Mammary epithelial cell (primary cell): ENCODE measurements at regions of chr7 and their contacts with region 1.

Region 1: GRCh38 chr7:27329911-27330310 is 87.3 kb downstream of the EVX1 start:
- DNase-seq: no peak
- H3K4me3 ChIP-seq: no peak overlapping the region
- H3K27ac ChIP-seq: no peak overlapping the region
- H3K4me1 ChIP-seq: peaks cover 5% of the 10 kb centered on the region
- H3K27me3 ChIP-seq: no peaks in the 10 kb centered on the region
- CTCF ChIP-seq: peak in 1 of 2 donors; percentile 40

Region 2: DNA sequence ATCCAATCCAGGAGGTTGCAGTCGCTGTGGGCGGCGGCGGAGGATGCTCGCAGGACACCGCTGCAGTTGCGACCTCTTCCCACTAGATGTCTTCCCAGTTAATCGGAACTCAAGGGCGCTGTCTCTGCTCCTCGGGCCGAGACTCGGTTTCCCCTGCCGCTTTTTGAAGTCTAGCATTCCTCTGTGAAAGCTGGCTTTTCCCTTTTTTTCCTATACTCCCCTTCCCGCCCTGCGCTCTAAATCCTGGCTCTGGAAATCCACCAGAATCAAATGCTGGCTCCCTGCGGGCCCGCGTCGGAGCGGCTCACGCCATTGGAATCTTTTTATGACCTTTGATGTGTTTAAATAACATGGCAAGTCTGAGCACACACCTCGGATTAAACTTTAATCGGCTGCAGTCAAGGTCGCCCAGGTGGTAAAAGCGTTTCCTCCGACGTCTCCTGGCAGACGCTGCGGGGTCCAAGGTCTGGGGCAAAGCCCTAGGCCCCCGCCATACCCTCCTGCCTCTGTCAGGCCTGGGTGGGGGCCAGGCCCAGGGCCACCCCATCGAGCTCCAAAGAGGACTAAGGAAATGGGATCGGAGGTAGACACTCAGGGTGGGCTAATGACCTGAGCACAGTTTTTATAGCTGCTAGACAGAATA is 119.3 kb before region 1 on chr7:
- CTCF ChIA-PET with region 1: no interaction called
- dilution Hi-C with region 1: no loop called
- in situ Hi-C with region 1: no loop called
- intact Hi-C with region 1: loop called (anchors 5 kb)
- DNase-seq: peak; percentile 20
- H3K4me3 ChIP-seq: no peak overlapping the region
- H3K27ac ChIP-seq: no peak overlapping the region
- H3K4me1 ChIP-seq: no peaks in the 10 kb centered on the region
- H3K27me3 ChIP-seq: peaks cover 20% of the 10 kb centered on the region
- CTCF ChIP-seq: peak; percentile 53 to 78

Region 3: DNA sequence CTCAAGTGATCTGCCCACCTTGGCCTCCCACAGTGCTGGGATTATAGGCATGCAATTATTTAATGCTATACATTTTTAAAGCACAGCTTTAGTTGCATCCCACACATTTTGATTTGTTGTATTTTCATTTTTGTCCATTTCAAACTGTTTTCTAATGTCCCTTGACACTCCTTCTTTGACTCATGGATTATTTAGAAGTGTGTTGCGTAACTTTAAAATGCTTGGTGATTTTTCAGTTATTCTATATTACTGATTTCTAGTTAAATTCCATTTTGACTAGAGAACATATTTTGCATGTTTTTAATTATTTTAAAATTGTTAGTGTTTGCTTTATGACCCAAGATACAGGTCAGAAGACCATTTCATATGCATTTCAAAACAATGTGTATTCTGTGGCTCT is 58.5 kb before region 1 on chr7:
- CTCF ChIA-PET with region 1: no interaction called
- dilution Hi-C with region 1: loop called (anchors 5 kb)
- in situ Hi-C with region 1: no loop called
- intact Hi-C with region 1: no loop called
- DNase-seq: no peak
- H3K4me3 ChIP-seq: no peak overlapping the region
- H3K27ac ChIP-seq: no peak overlapping the region
- H3K4me1 ChIP-seq: no peaks in the 10 kb centered on the region
- H3K27me3 ChIP-seq: no peaks in the 10 kb centered on the region
- CTCF ChIP-seq: no peak

Region 4: DNA sequence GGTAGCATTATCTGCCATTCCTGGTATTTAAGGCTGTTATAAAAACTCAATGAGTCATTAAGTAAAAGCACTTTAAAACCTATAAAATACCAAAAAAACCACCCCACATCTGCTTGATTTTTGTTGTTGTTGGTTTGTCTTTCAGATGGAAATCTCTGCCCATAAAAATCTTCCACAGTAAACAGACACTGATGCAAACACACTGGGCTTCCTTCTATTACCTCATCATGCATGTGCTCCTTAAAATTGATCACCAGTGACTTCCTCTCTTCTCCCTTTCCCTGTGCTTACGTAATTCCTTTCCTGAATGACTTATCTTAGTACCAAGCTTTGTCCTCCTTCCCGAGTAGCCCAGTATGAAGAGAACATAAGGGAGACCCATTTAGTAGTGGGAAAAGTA is 79.9 kb after region 1 on chr7:
- CTCF ChIA-PET with region 1: no interaction called
- dilution Hi-C with region 1: loop called (anchors 5 kb)
- in situ Hi-C with region 1: no loop called
- intact Hi-C with region 1: no loop called
- DNase-seq: no peak
- H3K4me3 ChIP-seq: no peak overlapping the region
- H3K27ac ChIP-seq: no peak overlapping the region
- H3K4me1 ChIP-seq: no peaks in the 10 kb centered on the region
- H3K27me3 ChIP-seq: no peaks in the 10 kb centered on the region
- CTCF ChIP-seq: no peak